Activated CD4-positive, alpha-beta memory T cell treated with anti-CD3 and anti-CD28 coated beads for 36 hours (primary cell): ENCODE measurements at regions of chr2 and their contacts with region 1.

Region 1: DNA sequence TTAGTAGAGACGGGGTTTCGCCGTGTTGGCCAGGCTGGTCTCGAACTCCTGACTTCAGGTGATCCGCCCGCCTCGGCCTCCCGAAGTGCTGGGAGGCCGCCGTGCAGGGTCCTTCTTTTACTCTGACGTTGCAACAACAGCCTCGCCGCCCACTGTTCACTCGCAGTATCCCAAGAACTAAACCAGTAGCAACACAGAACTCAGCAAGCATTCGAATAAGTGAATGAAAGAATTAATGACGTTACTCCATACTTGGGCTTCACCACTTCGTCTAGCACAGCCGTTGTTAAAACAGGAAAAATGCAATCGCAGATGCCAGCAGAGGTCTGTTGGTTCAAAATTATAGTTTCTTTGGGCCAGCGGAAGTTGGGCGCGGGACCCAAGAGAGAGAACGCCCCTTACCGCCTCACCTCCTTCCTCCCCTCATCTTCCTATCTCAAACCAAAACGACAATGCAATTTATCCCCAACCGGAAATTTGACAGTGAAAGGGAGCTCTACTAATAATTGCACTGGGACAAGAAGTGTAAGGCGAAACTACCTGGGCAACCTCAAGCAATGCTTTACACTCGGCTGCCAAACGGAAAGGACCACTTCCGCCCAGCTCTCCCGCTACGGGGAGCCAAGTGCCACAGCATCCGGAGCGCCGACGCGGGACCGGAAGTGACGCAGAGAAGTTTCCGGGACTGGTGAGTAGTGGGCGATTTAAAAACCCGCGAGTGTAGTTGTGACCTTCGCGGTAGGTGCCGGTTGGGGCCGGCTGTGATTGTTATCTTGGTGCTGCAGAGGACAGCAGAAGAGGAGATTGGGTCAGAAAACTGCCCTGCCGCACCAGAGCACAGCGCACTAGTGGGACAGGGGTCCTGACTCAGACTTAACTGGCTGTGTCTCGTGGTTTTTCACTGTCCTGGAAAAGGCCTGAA is at the starts of genes NIF3L1 and PPIL3:
- DNase-seq: peak; percentile 99
- H3K4me3 Mint-ChIP-seq: peak within 1 kb of the TSS; percentile 98
- H3K27ac Mint-ChIP-seq: peak within 1 kb of the TSS; percentile 100
- H3K4me1 Mint-ChIP-seq: peaks cover 44% of the 10 kb centered on the region
- H3K27me3 Mint-ChIP-seq: no peaks in the 10 kb centered on the region
- total RNA-seq, gene NIF3L1: 30.8 to 32.7 TPM
- total RNA-seq, gene PPIL3: 84.0 to 87.9 TPM

Region 2: DNA sequence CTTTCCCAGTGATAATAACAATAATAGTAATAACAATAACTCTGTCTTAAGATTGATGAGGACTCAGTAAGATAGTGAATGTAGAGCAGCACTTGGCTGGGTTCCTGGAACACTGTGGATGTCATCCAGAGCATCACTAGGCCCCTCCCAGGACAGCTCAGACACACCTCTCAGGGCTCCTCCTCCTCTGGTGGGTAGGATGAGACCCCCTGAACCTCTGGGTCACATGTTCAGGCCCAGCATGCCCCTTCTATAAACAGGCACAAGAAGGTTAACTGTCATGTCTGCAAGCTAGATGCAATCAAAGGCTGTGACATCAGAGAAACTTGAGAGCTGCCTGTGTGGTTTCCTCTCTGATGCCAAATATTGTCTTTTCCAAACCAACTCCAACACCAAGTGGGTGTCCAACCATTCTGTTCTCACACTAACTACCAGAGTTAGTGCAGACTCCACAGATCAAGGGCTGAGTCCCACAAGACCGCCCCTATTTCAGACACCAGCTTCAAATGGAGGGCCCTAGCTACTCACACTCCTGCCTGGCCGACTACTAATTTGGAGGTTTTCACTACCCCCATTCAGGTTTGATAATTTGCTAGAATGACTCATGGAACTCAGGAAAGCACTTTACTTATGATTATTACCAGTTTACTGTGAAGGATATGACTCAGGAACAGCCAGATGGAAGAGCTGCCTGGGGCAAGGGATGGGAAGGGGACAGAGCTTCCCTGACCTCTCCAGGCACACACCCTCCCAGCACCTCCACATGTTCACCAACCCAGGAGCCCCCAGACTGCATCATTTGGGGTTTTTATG is 123.6 kb before region 1 on chr2:
- CTCF ChIA-PET with region 1: no interaction called
- POLR2A ChIA-PET with region 1: interaction called, 3 read pairs
- intact Hi-C with region 1: loop called (anchors 1 kb)
- DNase-seq: peak; percentile 75
- H3K4me3 Mint-ChIP-seq: peak overlapping the region; percentile 42
- H3K27ac Mint-ChIP-seq: peak overlapping the region; percentile 96
- H3K4me1 Mint-ChIP-seq: peaks cover 32% of the 10 kb centered on the region
- H3K27me3 Mint-ChIP-seq: no peaks in the 10 kb centered on the region

Region 3: GRCh38 chr2:200877443-200877842 is 11.5 kb before region 1 on chr2:
- CTCF ChIA-PET with region 1: no interaction called
- POLR2A ChIA-PET with region 1: no interaction called
- intact Hi-C with region 1: no loop called
- DNase-seq: no peak
- H3K4me3 Mint-ChIP-seq: no peak overlapping the region
- H3K27ac Mint-ChIP-seq: no peak overlapping the region
- H3K4me1 Mint-ChIP-seq: peaks cover 6% of the 10 kb centered on the region
- H3K27me3 Mint-ChIP-seq: no peaks in the 10 kb centered on the region

Region 4: DNA sequence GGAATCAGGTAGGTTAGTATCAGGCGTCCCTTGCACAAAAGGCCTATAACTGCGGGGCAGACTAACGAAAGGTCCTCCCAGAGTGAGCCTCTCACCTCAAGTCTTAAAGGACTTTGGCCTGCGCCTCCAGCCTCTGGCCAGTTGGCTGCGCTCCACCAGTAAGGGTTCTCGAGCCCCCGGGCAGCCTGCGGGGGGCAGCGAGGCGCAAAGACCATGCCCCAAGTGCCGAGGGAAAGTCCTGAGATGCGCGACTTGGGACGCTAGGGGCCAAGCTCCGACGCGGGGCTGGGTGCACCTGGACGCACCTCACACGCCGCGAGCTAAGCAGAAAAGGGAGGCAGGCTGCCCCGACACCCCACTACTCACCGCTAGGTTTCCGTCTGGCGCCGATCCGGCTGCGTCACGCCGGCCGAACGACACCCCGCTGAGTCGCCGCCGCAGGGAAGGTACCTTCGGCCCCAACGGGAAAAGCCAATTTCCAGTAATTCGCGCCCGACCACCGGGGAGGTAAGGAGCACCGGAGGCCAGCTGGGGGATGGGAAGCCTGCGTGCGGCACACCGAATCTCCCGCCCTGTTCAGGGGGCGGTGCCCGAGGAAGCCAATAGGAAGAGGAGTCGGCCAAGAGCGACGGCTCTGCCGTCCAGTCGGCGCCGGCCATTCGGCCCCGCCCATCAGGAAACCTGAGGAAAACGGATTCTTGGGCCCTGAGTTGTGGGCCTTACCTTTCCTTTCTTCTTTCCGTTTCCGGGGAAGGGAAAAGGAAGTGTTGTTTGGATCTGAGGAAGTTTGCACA is 74.4 kb after region 1 on chr2 and contains the start of gene ORC2:
- CTCF ChIA-PET with region 1: no interaction called
- POLR2A ChIA-PET with region 1: interaction called, 8 read pairs
- intact Hi-C with region 1: loop called (anchors 1 kb)
- DNase-seq: peak; percentile 95
- H3K4me3 Mint-ChIP-seq: peak within 1 kb of the TSS; percentile 89
- H3K27ac Mint-ChIP-seq: peak within 1 kb of the TSS; percentile 93
- H3K4me1 Mint-ChIP-seq: peaks cover 60% of the 10 kb centered on the region
- H3K27me3 Mint-ChIP-seq: no peaks in the 10 kb centered on the region
- total RNA-seq, gene ORC2: 53.0 to 65.1 TPM

Region 5: DNA sequence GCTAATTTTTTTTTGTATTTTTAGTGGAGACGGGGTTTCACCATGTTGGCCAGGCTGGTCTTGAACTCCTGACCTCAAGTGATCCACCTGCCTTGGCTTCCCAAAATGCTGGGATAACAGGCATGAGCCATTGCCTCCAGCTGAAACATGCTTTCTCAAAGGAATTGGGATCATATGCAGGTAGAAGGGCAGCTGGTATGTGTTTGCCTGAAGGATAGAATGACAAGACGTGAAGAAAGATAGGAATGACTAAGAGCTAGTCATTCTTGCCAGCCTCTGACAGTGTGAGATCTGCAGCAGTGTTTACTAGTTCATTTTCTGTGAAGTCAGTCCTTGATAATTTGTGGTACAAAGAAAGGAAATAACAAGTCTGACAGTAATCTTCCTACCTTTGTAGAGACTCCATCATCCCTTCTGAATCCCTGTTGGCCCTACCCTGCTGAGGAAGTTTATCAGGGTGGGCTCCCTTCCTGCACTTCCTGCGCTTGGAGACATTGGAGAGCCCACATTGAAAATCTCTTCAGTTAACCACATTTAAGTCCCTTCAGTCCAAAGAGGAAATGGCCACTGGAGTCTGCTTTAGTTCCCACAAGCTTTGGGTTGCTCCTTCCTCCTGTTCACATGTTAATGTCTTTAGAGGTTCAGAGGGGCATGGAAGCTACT is 241.7 kb after region 1 on chr2:
- CTCF ChIA-PET with region 1: no interaction called
- POLR2A ChIA-PET with region 1: interaction called, 6 read pairs
- intact Hi-C with region 1: loop called (anchors 1 kb)
- DNase-seq: peak; percentile 55
- H3K4me3 Mint-ChIP-seq: peak overlapping the region; percentile 92
- H3K27ac Mint-ChIP-seq: peak overlapping the region; percentile 94
- H3K4me1 Mint-ChIP-seq: peaks cover 54% of the 10 kb centered on the region
- H3K27me3 Mint-ChIP-seq: no peaks in the 10 kb centered on the region